ENCODE measurements at regions of chr20 and their contacts with region 1.

Region 1: GRCh38 chr20:33719989-33720709 is at the start of gene PXMP4:
- DNase-seq: peak; percentile 72 to 95 (median 90)
- ATAC-seq: peak; percentile 96 to 97
- H3K4me3 Mint-ChIP-seq: peak within 1 kb of the TSS; percentile 70 to 97 (median 88)
- H3K27ac Mint-ChIP-seq: peak within 1 kb of the TSS; percentile 76 to 98 (median 93)
- H3K4me1 Mint-ChIP-seq: peaks cover 16 to 40% (median 28%) of the 10 kb centered on the region in 4 donors
- H3K27me3 Mint-ChIP-seq: no peaks in the 10 kb centered on the region
- polyA plus RNA-seq, gene PXMP4: 8.9 to 16.1 (median 16.0) TPM

Region 2: DNA sequence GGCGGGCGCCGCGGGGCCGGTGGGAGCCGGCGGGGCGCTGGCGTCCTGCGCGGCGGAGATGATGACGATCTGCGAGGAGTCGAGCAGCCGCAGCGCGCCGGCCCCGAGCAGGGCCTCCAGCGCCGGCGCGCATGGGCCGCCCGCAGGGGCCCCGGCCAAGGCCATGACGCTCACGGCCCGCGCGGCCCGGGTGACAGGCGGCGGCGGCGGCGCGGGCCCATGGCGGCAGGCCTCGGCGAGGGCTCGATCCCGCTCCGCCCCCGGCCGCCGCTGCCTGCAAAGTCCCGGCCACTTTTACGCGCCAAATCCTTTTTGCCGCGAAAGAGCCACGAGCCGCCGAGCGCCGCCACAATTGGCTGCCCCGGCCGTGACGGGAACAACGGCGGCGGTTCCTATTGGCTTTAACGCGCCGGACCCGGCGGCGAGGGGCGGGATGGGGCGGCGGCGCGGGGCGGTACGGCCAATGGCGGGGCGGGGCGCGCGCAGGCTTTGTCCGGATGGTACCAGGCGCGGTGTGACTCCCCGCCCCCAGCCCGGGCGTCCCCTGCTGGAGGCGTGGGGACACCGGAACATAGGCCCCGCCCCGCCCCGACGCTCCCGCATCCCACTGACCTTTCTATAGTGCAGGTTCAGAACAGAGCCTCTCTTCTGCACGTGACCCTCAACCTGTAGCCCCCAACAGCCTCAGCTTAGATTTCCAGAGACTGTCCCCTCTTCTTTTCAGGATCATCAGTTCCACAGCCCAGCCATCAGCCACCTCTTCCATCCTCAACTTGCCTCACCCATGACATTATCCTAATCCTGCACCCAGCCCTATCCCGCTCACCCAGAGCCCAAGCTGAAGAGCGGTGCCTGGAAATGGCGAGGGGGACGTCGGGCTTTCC is 33.8 kb before region 1 on chr20 and contains the start of gene E2F1:
- POLR2A ChIA-PET with region 1: interaction called, 15 read pairs
- DNase-seq: peak; percentile 86 to 94 (median 91)
- ATAC-seq: peak; percentile 92
- H3K4me3 Mint-ChIP-seq: peak within 1 kb of the TSS; percentile 63 to 90 (median 87)
- H3K27ac Mint-ChIP-seq: peak within 1 kb of the TSS; percentile 75 to 97 (median 88)
- H3K4me1 Mint-ChIP-seq: peaks cover 18 to 46% (median 36%) of the 10 kb centered on the region in 4 donors
- H3K27me3 Mint-ChIP-seq: no peaks in the 10 kb centered on the region
- polyA plus RNA-seq, gene E2F1: 0.19 to 0.49 (median 0.34) TPM

Region 3: DNA sequence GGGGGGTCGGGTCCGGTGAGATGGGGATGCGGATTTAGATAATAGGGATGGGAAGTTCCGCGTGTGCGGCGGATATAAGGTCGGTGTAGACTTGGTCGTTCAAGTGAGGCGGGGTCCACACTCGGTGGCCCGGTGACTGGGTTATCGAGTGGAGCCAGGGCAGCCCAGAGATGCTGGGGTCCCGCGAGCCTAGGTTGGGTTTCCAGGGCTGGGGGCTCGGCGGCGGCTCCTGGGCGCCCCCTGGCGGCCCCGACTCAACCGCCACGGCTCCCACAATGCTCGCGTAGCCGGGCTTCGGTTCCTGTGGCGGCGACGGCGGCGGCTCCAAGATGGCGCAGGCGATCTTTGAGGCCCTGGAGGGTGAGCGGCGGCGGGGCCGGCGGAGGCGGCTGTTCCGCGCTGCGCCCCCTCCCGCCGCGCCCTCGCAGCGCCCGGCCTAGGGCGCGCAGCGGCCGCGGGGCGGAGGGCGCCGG is 11.6 kb after region 1 on chr20 and contains the start of gene ZNF341:
- POLR2A ChIA-PET with region 1: interaction called, 50 read pairs
- DNase-seq: peak; percentile 81 to 94 (median 88)
- ATAC-seq: peak; percentile 75 to 87
- H3K4me3 Mint-ChIP-seq: peak within 1 kb of the TSS; percentile 83 to 95 (median 90)
- H3K27ac Mint-ChIP-seq: peak within 1 kb of the TSS; percentile 84 to 98 (median 95)
- H3K4me1 Mint-ChIP-seq: peaks cover 18 to 28% (median 23%) of the 10 kb centered on the region in 4 donors
- H3K27me3 Mint-ChIP-seq: no peaks in the 10 kb centered on the region
- polyA plus RNA-seq, gene ZNF341: 0.75 to 3.8 (median 1.0) TPM